Heart right ventricle (tissue), 16 donors: ENCODE measurements at regions of chr17 and their contacts with region 1.

Region 1: DNA sequence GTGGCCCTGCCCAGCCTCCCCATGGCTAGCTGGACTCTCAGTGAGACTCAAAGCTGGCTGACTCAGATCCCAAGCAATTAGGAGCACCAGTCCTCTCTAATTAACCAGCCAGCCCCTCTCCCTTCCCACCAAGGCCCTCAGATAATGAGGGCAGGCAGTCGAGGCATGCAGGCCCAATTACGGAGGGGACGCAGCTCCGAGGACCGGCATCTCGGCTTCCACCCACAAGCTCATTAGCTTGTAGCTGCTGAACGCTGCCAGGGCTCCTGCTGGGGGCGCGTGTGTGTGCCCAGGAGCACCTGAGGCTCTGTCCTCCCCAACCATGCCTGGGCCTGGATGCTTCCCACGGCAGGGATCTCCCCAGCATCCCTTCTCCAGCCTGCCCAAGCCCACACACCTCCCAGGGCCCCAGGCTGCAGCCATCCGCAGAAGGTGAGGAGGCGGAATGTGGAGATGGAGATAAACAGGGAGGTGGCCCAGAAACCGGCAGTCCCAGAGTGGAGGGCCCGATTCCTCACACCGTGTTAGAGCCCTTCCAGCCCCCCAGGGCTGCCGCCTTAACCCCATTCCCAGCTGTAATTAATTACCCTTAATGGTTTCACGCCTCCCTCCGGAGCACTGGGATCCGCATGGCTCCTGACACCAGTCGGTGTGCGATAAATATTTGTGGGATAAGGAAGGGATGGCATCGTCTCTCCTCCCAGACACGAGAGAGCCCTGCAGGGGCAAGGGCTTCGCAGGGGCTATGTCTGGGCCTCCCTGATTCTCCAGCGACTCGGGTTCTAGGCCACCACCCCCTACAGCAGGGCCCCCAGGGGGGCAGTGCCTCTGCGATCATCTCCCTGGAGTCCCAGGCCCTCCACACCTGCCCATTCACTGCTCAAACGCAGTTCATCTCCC is 42.2 kb downstream of the RPH3AL start:
- DNase-seq: no peak
- ATAC-seq: no peak
- H3K4me3 ChIP-seq: no peak overlapping the region
- H3K27ac ChIP-seq: no peak overlapping the region
- H3K4me1 ChIP-seq: peaks cover 0 to 21% (median under 1%) of the 10 kb centered on the region in 9 donors
- H3K27me3 ChIP-seq: peaks cover 0 to 23% (median 0%) of the 10 kb centered on the region in 7 donors
- CTCF ChIP-seq: no peak

Region 2: DNA sequence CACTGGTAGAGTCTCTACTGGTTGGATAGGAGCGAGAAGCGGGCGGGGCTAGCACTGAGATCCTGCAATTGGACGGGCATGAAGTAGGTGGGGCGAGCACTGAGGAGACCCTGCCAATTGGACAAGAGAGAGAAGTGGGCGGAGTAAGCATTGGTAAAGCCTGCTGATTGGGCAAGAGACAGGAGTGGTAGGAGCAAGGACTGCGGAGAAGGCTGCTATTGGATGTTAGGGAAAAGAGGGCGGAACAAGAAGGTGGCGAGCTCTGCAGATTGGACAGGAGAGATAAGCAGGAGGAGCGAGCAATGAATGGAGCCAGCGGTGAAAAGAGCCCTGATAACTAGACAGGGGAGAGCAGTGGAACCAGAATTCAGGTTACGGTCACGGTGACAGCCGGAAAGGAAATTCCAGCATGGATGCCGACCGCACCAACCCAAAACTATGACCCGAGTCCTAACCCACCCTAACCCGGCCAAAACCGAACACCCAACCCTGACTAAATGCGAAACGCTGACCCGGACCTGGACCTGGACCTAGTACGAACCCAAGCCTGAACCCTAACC is 168.2 kb before region 1 on chr17:
- intact Hi-C with region 1: no loop called
- DNase-seq: peak in 1 of 2 donors; percentile 11
- ATAC-seq: peak in 1 of 8 donors; percentile 19
- H3K4me3 ChIP-seq: no peak overlapping the region
- H3K27ac ChIP-seq: no peak overlapping the region
- H3K4me1 ChIP-seq: peaks cover 0 to 12% (median 4%) of the 10 kb centered on the region in 9 donors
- H3K27me3 ChIP-seq: peaks cover 0 to 3% (median 0%) of the 10 kb centered on the region in 7 donors
- CTCF ChIP-seq: no peak

Region 3: DNA sequence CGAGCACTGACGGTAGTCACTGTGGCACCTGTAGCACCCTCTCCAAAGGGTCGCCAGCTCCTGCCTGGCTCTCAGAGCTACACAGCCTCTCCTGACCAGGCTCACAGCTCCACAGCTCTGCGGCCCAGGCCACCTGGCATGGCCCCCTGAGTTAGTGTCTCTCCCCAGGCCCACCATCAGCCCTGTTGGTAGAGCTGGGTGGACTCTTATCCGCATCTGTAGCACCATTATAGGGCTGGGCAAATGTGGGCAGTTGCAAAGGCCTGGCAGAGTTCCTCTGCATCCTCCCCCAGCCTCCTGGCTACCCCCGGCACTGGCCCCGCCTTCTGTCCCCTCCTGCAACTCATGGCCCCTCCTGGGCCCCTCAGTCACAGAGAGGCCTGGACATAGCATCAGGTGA is 154.8 kb before region 1 on chr17:
- intact Hi-C with region 1: loop called in 1 of 10 experiments (anchors 5 kb)
- DNase-seq: no peak
- ATAC-seq: no peak
- H3K4me3 ChIP-seq: no peak overlapping the region
- H3K27ac ChIP-seq: no peak overlapping the region
- H3K4me1 ChIP-seq: no peaks in the 10 kb centered on the region
- H3K27me3 ChIP-seq: no peaks in the 10 kb centered on the region
- CTCF ChIP-seq: no peak

Region 4: GRCh38 chr17:327971-328370 is 17.6 kb after region 1 on chr17:
- intact Hi-C with region 1: loop called in 1 of 10 experiments (anchors 1 kb)
- DNase-seq: no peak
- ATAC-seq: no peak
- H3K4me3 ChIP-seq: no peak overlapping the region
- H3K27ac ChIP-seq: no peak overlapping the region
- H3K4me1 ChIP-seq: peaks cover 0 to 28% (median 13%) of the 10 kb centered on the region in 9 donors
- H3K27me3 ChIP-seq: peaks cover 0 to 13% (median 0%) of the 10 kb centered on the region in 7 donors
- CTCF ChIP-seq: no peak